Mammary epithelial cell (primary cell): ENCODE measurements at regions of chr9 and their contacts with region 1.

Region 1: DNA sequence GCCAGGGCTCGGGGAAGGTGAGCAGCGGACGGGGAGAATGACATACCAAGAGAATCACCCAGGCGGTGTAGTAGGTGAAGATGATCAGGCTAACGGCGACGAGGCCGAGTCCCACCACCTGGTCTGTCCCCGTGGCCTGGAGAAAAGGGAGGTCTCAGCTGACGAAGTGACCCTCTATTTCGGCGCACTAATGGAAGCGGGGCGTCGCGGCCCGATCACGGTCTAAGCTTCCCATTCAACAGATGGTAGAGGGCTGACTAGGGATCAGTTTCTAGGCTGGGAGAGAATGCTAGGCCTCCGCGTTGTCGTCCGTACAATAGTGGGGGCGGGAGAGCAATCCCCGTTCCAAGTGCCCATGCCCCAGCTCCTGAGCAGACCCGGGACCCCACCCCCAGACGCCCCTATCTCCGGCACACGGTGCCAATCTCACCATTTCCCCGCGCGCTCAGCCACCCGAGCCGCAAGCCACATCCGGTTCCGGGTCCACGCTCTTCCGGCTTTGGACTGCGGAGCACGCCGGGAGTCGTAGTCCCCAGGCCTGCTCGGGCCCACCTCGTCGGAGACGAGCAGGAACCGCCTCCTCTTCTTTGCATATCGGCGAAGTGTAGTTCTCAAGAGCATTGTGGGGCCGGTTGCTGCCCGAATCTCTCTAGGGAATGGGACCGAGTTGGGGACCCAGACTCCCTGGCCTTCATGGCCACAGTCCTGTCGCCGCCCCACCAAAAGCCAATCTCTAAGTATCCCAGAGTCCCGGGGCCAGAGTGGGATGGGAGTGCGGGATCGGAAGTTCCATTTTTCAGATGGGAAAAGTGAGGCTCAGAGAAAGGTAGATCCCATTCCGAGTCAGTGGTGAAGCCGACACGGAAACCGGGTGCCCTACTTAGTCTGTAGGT is at the start of gene DPM2:
- DNase-seq: peak; percentile 78
- H3K4me3 ChIP-seq: peak within 1 kb of the TSS; percentile 60 to 89 (median 73)
- H3K27ac ChIP-seq: peak within 1 kb of the TSS; percentile 60
- H3K4me1 ChIP-seq: peaks cover 23% of the 10 kb centered on the region
- H3K27me3 ChIP-seq: no peaks in the 10 kb centered on the region
- CTCF ChIP-seq: no peak
- total RNA-seq, gene DPM2: 10.0 to 48.7 TPM

Region 2: GRCh38 chr9:127598839-127599548 is 338.6 kb before region 1 on chr9:
- CTCF ChIA-PET with region 1: no interaction called
- dilution Hi-C with region 1: no loop called
- in situ Hi-C with region 1: no loop called
- intact Hi-C with region 1: no loop called
- DNase-seq: no peak
- H3K4me3 ChIP-seq: no peak overlapping the region
- H3K27ac ChIP-seq: no peak overlapping the region
- H3K4me1 ChIP-seq: no peaks in the 10 kb centered on the region
- H3K27me3 ChIP-seq: no peaks in the 10 kb centered on the region
- CTCF ChIP-seq: no peak

Region 3: DNA sequence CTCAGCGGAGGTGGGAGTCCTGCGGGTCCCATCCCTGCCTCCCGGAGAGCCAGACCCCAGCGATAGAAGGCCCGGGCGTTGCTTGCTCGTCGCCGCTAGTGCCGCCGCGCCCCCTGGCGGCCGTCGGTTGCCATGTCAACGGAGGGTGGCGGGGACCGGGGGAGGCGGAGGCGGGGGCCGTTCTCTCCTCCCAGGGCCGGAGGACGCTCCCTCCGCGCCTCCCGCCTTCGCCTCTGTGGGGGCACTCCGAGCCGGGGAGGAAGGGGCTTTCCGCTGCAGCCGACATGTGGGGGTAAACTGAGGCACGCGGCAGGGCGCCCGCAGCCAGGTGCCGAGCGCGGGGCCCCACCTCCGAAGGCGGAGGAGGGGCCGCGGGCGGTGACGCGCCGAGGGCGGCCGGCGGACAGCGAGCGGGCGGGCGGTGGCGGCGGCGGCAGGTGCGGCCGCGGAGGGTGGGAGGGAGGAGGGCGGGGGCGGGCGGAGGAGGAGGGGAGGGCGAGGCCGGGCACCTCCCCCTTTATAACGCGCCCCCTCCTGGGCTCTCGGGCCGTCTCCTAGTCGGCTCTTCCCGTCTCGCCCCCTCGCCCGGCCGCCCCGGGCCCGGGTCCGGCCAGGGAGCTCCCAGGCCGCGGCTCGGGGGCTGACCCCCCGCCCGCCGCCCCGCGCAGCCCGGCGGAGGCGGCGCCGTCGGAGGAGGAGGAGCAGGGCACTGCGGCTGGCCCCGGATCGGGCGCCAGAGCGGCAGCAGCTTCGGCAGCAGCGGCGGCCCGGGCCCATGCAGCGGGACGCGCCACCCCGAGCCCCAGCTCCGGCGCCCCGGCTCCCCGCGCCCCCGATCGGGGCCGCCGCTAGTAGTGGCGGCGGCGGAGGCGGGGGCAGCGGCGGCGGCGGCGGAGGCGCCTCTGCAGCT is 152.4 kb before region 1 on chr9:
- CTCF ChIA-PET with region 1: no interaction called
- dilution Hi-C with region 1: no loop called
- in situ Hi-C with region 1: no loop called
- intact Hi-C with region 1: no loop called
- DNase-seq: peak; percentile 74
- H3K4me3 ChIP-seq: peak overlapping the region; percentile 47 to 94 (median 70)
- H3K27ac ChIP-seq: peak overlapping the region; percentile 43
- H3K4me1 ChIP-seq: peaks cover 18% of the 10 kb centered on the region
- H3K27me3 ChIP-seq: no peaks in the 10 kb centered on the region
- CTCF ChIP-seq: peak; percentile 35 to 84

Region 4: DNA sequence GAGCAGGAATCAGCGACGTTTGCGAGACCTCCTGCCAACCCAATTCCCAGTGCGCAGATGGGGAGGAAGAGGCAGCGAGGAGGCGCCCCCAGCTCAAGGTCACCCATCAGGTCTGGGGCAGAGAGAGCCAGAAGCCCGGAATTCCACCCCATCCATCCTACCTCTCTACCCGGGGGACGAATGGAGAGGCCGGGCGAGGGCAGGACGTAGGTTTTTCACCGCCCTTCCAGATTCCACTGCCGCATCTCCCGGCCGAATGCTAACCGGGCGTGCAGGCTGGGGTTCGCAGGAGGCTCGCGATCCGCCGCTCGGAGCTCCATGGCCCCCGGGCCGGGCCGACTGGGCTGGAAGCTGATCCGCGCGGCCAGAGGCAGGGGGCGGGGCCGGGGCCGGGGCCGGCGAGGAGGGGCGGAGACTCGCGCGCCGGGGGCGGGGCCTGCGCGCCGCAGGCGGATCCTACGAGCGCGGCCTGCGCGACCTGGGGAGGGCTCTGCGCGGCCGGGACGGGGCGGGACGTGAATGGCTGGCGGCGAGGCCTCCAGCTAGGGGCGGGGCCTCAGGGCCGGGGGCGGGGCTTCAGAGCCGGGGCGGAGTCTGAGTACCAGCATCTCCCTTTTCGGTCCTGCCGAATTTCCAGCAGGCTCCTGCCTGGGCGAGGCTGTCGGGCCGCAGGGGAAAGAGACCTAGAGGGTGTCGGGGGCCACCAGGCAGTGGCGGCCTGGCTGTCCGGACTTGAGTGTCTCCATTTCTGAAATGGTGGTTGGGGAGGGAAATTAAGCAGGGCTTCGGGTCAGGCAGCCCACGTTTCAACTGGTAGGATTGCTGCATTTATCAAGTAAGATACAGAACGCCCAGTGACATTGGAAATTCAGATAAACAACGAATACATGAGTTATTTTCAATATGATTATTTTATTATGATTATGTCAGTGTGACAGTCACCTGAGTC is 20.7 kb before region 1 on chr9 and contains the start of gene ST6GALNAC4:
- CTCF ChIA-PET with region 1: no interaction called
- dilution Hi-C with region 1: no loop called
- in situ Hi-C with region 1: no loop called
- intact Hi-C with region 1: no loop called
- DNase-seq: peak; percentile 76
- H3K4me3 ChIP-seq: peak within 1 kb of the TSS; percentile 35 to 62 (median 58)
- H3K27ac ChIP-seq: peak within 1 kb of the TSS; percentile 16
- H3K4me1 ChIP-seq: peaks cover 38% of the 10 kb centered on the region
- H3K27me3 ChIP-seq: no peaks in the 10 kb centered on the region
- CTCF ChIP-seq: no peak
- total RNA-seq, gene ST6GALNAC4: 14.3 to 19.6 TPM

Region 5: DNA sequence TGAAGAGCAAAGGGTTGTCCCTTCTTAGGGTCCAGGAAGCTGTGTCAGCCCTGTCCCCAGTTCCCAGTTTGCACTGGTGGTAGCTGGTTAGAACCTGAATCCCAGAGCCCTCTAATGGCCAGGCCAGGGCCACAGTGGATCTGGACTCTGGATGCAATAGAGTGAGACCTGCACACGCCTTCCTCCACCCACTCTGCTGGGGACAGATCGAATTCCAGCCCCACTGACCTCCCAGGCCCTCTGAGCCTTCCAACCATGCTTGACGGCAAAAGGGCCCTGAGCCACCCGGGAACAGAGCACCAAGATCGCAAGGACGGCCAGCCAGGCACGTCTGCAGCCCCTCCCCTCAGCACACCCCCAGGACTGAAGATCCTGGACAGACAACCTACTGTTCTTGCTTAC is 105.8 kb after region 1 on chr9:
- CTCF ChIA-PET with region 1: no interaction called
- dilution Hi-C with region 1: loop called (anchors 10 kb)
- in situ Hi-C with region 1: loop called in 1 of 2 experiments (anchors 5 kb)
- intact Hi-C with region 1: no loop called
- DNase-seq: no peak
- H3K4me3 ChIP-seq: no peak overlapping the region
- H3K27ac ChIP-seq: no peak overlapping the region
- H3K4me1 ChIP-seq: no peaks in the 10 kb centered on the region
- H3K27me3 ChIP-seq: no peaks in the 10 kb centered on the region
- CTCF ChIP-seq: no peak

Region 6: DNA sequence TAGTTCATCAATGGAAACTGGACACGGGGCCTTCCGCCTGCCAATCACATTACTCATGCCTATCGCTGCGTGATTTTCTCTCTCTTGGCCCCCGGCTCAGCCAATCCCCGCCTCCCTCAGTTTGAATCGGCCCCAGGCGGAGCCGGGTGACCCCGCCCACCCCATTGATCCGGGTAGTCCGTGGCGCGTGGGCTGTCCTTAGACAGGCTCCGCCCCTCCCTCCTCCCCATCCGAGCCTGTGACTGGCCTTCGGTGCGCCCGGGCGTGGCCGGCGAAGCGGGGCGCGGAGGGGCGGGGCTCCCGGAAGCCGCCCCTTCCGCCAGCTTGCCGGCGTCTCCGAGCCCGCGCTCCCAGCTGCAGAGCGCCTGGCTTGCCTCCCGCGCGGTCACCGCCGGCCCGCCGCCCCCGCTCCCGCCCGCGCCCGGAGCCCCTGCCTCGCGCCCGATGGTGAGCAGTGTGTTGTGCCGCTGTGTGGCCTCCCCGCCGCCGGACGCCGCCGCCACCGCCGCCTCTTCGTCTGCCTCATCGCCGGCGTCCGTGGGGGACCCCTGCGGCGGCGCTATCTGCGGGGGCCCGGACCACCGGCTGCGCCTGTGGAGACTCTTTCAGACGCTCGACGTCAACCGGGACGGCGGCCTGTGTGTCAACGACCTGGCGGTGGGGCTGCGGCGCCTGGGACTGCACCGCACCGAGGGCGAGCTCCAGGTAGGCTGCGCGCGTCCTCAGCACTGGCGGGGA is 130.4 kb after region 1 on chr9 and contains the start of gene SLC25A25:
- CTCF ChIA-PET with region 1: no interaction called
- dilution Hi-C with region 1: loop called (anchors 10 kb)
- in situ Hi-C with region 1: no loop called
- intact Hi-C with region 1: no loop called
- DNase-seq: peak; percentile 98
- H3K4me3 ChIP-seq: peak within 1 kb of the TSS; percentile 74 to 83 (median 82)
- H3K27ac ChIP-seq: peak within 1 kb of the TSS; percentile 99
- H3K4me1 ChIP-seq: peaks cover 21% of the 10 kb centered on the region
- H3K27me3 ChIP-seq: no peaks in the 10 kb centered on the region
- CTCF ChIP-seq: no peak
- total RNA-seq, gene SLC25A25: 10.8 to 12.8 TPM